ENCODE measurements at regions of chr13 and their contacts with region 1.

Region 1: GRCh38 chr13:79716191-79716590 is 235.2 kb downstream of the NDFIP2 start:
- DNase-seq: no peak
- ATAC-seq: no peak
- H3K4me3 ChIP-seq: no peak overlapping the region
- H3K27ac ChIP-seq: no peak overlapping the region
- H3K4me1 ChIP-seq: no peaks in the 10 kb centered on the region
- H3K27me3 ChIP-seq: no peaks in the 10 kb centered on the region
- CTCF ChIP-seq: no peak

Region 2: GRCh38 chr13:81275666-81276258 is 1559.6 kb after region 1 on chr13:
- intact Hi-C with region 1: loop called in 1 of 2 experiments (anchors 5 kb)
- DNase-seq: no peak
- ATAC-seq: no peak
- H3K4me3 ChIP-seq: no peak overlapping the region
- H3K27ac ChIP-seq: no peak overlapping the region
- H3K4me1 ChIP-seq: no peaks in the 10 kb centered on the region
- H3K27me3 ChIP-seq: no peaks in the 10 kb centered on the region
- CTCF ChIP-seq: no peak

Measured in psoas muscle (tissue), 8 donors.